GM10248 (cell line): ENCODE measurements at regions of chr20 and their contacts with region 1.

Region 1: DNA sequence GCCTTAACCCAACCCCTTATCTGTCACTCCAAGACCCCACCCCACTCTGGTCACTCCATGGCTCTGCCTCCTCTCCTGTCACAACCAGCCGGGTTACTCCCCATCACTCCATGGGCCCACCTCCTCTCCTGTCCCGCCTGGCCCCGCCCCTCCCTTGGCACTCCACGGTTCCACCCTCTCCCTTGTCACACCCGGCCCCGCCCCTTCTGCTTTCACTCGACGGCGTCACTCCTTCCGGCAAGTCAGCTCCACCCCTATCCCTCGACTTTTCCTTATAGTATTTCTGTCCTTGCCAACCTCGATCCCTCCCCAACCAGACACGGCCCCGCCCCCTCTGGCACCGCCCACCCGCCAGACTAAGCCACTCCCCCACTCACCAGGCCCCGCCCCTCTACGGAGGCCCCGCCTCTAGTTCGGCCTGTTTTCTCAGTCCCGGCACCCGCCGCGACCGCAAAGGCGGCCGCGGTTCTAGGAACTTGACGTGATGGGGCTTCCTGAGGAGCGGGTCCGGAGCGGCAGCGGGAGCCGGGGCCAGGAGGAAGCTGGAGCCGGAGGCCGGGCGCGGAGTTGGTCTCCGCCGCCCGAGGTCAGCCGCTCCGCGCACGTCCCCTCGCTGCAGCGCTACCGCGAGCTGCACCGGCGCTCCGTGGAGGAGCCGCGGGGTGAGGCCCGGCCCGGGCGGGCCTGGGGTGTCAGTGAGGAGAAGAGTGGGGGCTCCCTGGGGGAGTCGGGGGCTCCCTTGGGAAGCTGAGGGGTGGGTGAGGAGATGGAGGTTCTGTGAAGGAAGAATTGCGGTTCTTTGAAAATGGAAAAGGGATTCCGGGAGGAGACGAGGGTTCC is at the start of gene ACSS2:
- DNase-seq: peak; percentile 93
- CTCF ChIP-seq: no peak

Region 2: GRCh38 chr20:34861386-34862084 is 14.8 kb before region 1 on chr20:
- CTCF ChIA-PET with region 1: interaction called, 37 read pairs
- POLR2A ChIA-PET with region 1: no interaction called
- DNase-seq: no peak
- CTCF ChIP-seq: no peak

Region 3: GRCh38 chr20:34943808-34944568 is 67.6 kb after region 1 on chr20:
- CTCF ChIA-PET with region 1: interaction called, 18 read pairs
- POLR2A ChIA-PET with region 1: no interaction called
- DNase-seq: no peak
- CTCF ChIP-seq: no peak

Region 4: DNA sequence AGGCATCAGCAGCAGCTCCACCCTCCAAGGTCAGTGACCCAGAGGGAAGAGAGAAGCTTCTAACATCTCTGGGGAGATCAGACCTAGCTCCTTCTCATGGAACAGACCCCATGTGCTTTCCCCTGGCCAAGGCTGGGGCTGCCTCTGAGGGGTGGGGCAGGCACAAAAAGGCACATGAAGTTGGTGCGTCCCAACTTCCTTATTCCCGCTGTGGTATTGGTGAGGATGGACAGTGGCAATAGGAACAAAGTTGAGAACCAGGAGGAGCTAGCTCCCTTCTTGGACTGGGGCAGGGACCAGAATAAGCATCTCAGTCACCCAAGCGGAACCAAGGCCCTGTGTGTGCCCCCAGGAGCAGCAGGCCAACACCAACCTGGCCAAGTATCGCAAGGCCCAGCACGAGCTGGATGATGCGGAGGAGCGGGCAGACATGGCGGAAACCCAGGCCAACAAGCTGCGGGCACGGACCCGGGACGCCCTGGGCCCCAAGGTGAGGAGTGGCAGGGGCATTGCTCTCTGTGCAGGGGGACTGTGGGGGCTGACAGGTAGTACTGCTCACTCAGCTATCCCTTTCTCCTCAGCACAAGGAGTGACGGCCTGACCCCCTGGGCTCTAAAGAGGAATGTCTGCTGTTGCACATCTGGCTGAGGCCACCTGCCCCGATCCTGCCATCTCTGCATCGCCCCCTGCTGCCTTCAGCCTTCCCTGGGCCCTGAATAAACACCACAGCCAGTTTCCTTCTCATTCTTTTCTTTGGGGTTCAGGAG is 125.4 kb after region 1 on chr20:
- CTCF ChIA-PET with region 1: interaction called, 16 read pairs
- POLR2A ChIA-PET with region 1: no interaction called
- DNase-seq: no peak
- CTCF ChIP-seq: peak; percentile 24

Region 5: DNA sequence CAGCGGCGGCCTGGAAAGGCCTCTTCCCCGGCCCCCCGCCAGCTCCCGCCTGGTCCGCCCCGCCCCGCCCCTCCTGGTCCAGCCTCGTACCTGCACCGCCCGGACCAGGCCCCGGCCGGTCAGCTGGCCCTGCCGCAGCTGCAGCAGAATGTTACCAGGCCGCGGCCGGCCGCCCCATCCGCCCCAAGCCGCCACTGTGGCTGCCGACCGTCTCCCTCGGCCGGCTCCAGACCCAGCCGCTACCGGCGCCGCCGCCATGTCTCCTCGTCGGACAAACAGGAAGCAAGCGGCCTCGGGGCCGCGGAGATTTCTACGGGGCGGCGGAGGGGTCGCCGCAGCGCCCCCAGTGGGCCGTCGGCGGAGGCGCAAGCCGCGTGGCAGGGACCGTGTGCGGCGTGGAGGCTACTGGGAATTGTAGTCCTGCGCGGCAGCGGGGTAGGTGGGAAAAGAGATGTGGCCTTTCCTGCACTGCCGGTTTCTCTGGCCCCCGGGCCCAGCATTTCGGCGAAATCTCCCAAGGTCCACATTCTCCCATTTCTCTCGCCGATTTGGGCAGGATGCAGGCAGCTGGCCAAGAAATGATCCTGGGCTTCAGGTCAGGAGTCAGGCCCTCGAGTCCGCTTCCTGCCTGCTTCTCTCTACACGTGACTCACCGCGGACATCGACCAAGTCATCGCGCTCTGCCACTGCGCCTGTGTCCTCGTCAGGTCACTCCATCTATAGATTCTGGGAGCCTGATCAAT is 216.3 kb after region 1 on chr20 and contains the start of gene TRPC4AP:
- CTCF ChIA-PET with region 1: interaction called, 15 read pairs
- POLR2A ChIA-PET with region 1: interaction called, 5 read pairs
- DNase-seq: peak; percentile 92
- CTCF ChIP-seq: peak; percentile 95